Right ventricle myocardium inferior (tissue), 1 donor: ENCODE measurements at regions of chr11 and their contacts with region 1.

Region 1: DNA sequence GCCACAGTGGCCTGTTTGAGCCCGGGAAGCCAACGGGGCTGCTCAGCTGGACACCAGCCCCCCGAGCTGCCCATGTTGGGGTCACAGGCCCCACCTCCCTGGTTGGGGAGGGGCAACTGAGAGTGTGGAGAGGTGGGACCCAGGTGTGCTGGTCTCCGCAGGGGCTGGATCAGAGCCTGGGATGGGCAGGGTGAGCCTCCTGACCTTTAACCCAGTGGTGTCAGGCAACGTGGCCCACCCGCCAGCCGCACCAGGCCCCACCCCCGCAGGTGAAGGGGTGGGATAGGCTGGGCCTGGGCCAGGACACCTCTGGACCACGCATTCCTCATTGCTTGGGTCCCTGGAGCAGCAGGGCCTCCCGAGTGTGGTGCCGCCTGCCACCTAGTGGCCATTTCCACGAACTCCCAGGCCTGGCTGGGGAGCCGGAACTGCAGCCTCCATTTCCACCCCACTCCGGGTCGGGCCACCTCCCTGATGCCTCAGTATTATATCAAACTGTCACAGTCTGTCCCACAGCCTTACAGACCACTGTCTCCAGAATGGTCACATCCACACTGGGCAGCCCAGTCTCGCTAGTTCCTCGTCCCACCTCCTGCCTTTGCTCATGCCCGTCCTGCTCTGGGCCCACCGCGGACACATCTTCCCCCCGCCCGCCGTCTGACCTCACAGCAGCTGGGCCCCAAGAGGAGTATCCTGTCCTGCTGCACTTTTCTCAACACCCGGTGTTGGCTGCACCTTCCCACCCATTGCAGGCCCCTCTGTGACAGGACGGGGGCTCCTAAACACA is 13.3 kb upstream of the PPP6R3 start:
- DNase-seq: peak; percentile 87
- ATAC-seq: peak; percentile 91

Region 2: GRCh38 chr11:68257475-68258362 is 189.5 kb before region 1 on chr11:
- intact Hi-C with region 1: loop called (anchors 2 kb)
- DNase-seq: peak; percentile 98
- ATAC-seq: peak; percentile 84

Region 3: GRCh38 chr11:68398995-68399851 is 48.0 kb before region 1 on chr11:
- intact Hi-C with region 1: loop called (anchors 5 kb)
- DNase-seq: peak; percentile 83
- ATAC-seq: peak; percentile 87